Vagina (tissue), 2 donors: ENCODE measurements at regions of chr7 and their contacts with region 1.

Region 1: GRCh38 chr7:103094102-103094501 is 19.2 kb downstream of the ARMC10 start:
- DNase-seq: no peak
- H3K4me3 ChIP-seq: no peak overlapping the region
- H3K27ac ChIP-seq: no peak overlapping the region
- H3K4me1 ChIP-seq: no peaks in the 10 kb centered on the region
- H3K27me3 ChIP-seq: no peaks in the 10 kb centered on the region
- CTCF ChIP-seq: no peak
- POLR2A ChIP-seq: no peak

Region 2: GRCh38 chr7:101729241-101729993 is 1364.7 kb before region 1 on chr7:
- intact Hi-C with region 1: no loop called
- DNase-seq: no peak
- H3K4me3 ChIP-seq: no peak overlapping the region
- H3K27ac ChIP-seq: no peak overlapping the region
- H3K4me1 ChIP-seq: peaks cover 15% of the 10 kb centered on the region
- H3K27me3 ChIP-seq: no peaks in the 10 kb centered on the region
- CTCF ChIP-seq: no peak
- POLR2A ChIP-seq: no peak

Region 3: GRCh38 chr7:103009466-103010185 is 84.5 kb before region 1 on chr7:
- intact Hi-C with region 1: no loop called
- DNase-seq: no peak
- H3K4me3 ChIP-seq: no peak overlapping the region
- H3K27ac ChIP-seq: no peak overlapping the region
- H3K4me1 ChIP-seq: no peaks in the 10 kb centered on the region
- H3K27me3 ChIP-seq: no peaks in the 10 kb centered on the region
- CTCF ChIP-seq: no peak
- POLR2A ChIP-seq: no peak

Region 4: GRCh38 chr7:103113164-103113563 is 19.1 kb after region 1 on chr7:
- intact Hi-C with region 1: loop called (anchors 1 kb)
- DNase-seq: no peak
- H3K4me3 ChIP-seq: no peak overlapping the region
- H3K27ac ChIP-seq: no peak overlapping the region
- H3K4me1 ChIP-seq: no peaks in the 10 kb centered on the region
- H3K27me3 ChIP-seq: no peaks in the 10 kb centered on the region
- CTCF ChIP-seq: no peak
- POLR2A ChIP-seq: no peak